Aorta (tissue), 5 donors: ENCODE measurements at regions of chr21 and their contacts with region 1.

Region 1: GRCh38 chr21:36156339-36156814 is 247 bp upstream of the DOP1B start:
- DNase-seq: peak; percentile 100
- ATAC-seq: peak; percentile 98
- H3K4me3 ChIP-seq: peak overlapping the region; percentile 75 to 95
- H3K27ac ChIP-seq: no peak overlapping the region
- H3K4me1 ChIP-seq: no peaks in the 10 kb centered on the region
- H3K27me3 ChIP-seq: no peaks in the 10 kb centered on the region

Region 2: DNA sequence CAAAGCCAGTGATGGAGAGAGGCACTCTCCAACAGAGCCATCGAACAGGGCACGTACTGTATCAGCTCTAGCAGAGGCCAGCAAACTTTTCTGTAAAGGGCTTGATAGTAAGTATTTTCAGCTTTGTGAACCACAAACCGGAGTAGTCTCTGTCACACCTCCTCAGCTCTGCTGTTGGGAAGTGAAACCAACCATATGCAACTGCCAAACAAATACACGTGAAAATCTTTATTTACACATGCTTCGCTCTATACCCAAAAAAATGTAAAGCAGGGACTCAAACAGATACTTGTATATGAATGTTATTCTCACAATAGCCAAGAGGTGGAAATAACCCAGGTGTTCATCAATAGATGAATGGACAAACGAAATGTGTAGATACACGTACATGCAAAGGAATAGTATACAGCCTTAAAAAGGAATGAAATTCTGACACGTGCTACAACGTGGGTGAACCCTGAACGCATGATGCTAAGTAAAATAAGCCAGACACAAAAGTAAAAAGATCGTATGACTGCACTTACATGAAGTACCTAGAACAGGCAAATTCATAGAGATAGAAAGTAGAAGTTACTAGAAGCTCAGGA is 135.0 kb before region 1 on chr21:
- intact Hi-C with region 1: no loop called
- DNase-seq: no peak
- ATAC-seq: no peak
- H3K4me3 ChIP-seq: no peak overlapping the region
- H3K27ac ChIP-seq: no peak overlapping the region
- H3K4me1 ChIP-seq: no peaks in the 10 kb centered on the region
- H3K27me3 ChIP-seq: peaks cover 0 to 2% of the 10 kb centered on the region in 2 donors

Region 3: DNA sequence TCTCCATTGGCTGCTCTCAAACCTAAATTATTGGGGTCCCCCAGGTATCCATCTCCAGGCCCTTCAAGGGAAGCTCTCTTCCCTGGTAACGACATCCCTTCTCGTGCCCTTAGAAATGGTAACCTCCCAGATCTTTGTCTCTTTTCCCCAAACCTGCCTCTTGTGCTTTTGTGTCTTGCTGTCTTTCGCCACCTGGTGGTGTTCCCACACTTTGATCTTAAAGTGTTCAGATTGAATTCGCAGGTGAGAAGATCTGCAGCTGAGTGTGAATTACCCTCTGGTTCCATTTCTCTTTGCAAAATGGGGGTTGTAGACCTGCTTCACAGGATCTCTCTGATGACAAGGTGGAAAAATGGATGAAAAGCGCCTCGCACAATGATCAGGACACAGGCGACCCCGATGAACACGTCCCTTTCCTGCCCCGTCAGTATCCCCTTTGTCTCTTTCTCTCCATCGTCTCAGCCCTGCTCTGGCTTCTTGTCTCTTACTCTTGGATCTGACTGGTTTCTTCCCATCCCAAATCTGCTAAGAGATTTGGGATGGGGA is 53.3 kb after region 1 on chr21:
- intact Hi-C with region 1: loop called in 1 of 2 experiments (anchors 2 kb)
- DNase-seq: no peak
- ATAC-seq: no peak
- H3K4me3 ChIP-seq: no peak overlapping the region
- H3K27ac ChIP-seq: no peak overlapping the region
- H3K4me1 ChIP-seq: no peaks in the 10 kb centered on the region
- H3K27me3 ChIP-seq: no peaks in the 10 kb centered on the region

Region 4: DNA sequence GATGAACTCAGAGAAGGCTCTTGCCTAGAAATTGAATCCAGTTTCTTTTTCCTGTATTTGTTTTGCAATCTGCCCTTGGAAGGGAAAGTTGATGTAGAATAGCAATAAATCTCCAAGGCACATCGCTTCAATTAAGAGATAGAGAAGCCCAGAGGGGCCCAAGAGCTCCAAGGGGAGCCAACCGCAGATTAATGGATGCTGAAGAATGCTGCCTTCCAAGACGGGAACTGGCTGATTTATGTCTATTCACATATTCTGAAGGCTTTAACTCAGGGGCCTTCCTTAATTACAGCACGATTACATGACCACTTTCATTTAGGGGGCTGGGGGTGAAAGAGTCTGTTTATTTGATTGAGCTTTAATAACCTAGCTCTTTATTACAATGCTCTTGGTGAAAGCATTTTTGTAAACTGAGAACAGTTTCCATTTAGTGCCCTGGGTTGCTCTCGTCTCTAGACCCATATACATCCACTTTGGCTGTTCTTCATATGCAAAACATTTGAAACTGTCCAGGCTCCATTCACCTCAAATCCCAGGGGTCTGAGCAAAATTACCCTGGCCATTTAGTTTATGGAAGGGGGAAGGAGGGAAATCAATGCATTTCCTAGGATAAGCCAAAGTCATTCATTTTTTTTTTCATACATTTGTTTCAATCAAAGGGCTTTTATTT is 411.0 kb after region 1 on chr21:
- intact Hi-C with region 1: no loop called
- DNase-seq: no peak
- ATAC-seq: no peak
- H3K4me3 ChIP-seq: no peak overlapping the region
- H3K27ac ChIP-seq: no peak overlapping the region
- H3K4me1 ChIP-seq: no peaks in the 10 kb centered on the region
- H3K27me3 ChIP-seq: no peaks in the 10 kb centered on the region